Transverse colon (tissue), 4 donors: ENCODE measurements at regions of chr1 and their contacts with region 1.

Region 1: GRCh38 chr1:85438353-85438752 is 26.6 kb downstream of the DDAH1 start:
- DNase-seq: no peak
- H3K4me3 ChIP-seq: no peak overlapping the region
- H3K27ac ChIP-seq: no peak overlapping the region
- H3K4me1 ChIP-seq: peaks cover 0 to 12% (median 5%) of the 10 kb centered on the region in 4 donors
- H3K27me3 ChIP-seq: no peaks in the 10 kb centered on the region
- CTCF ChIP-seq: no peak
- EP300 ChIP-seq: no peak
- POLR2A ChIP-seq: no peak

Region 2: GRCh38 chr1:85200870-85201339 is 237.4 kb before region 1 on chr1 and contains the start of gene SYDE2:
- in situ Hi-C with region 1: no loop called
- intact Hi-C with region 1: no loop called
- DNase-seq: peak; percentile 84
- H3K4me3 ChIP-seq: peak within 1 kb of the TSS; percentile 84 to 93 (median 84)
- H3K27ac ChIP-seq: peak within 1 kb of the TSS; percentile 98 to 99 (median 98)
- H3K4me1 ChIP-seq: peaks cover 0 to 47% (median 19%) of the 10 kb centered on the region in 4 donors
- H3K27me3 ChIP-seq: no peaks in the 10 kb centered on the region
- CTCF ChIP-seq: no peak
- EP300 ChIP-seq: no peak
- POLR2A ChIP-seq: peak; percentile 87
- total RNA-seq, gene SYDE2: 10.1 to 28.8 (median 15.4) TPM

Region 3: GRCh38 chr1:85379203-85380136 is 58.9 kb before region 1 on chr1:
- in situ Hi-C with region 1: no loop called
- intact Hi-C with region 1: loop called (anchors 2 kb)
- DNase-seq: no peak
- H3K4me3 ChIP-seq: no peak overlapping the region
- H3K27ac ChIP-seq: no peak overlapping the region
- H3K4me1 ChIP-seq: peaks cover 0 to 19% (median under 1%) of the 10 kb centered on the region in 4 donors
- H3K27me3 ChIP-seq: no peaks in the 10 kb centered on the region
- CTCF ChIP-seq: no peak
- EP300 ChIP-seq: no peak
- POLR2A ChIP-seq: no peak

Region 4: GRCh38 chr1:85801520-85801919 is 363.2 kb after region 1 on chr1:
- in situ Hi-C with region 1: no loop called
- intact Hi-C with region 1: no loop called
- DNase-seq: no peak
- H3K4me3 ChIP-seq: no peak overlapping the region
- H3K27ac ChIP-seq: no peak overlapping the region
- H3K4me1 ChIP-seq: no peaks in the 10 kb centered on the region
- H3K27me3 ChIP-seq: no peaks in the 10 kb centered on the region
- CTCF ChIP-seq: no peak
- EP300 ChIP-seq: no peak
- POLR2A ChIP-seq: no peak

Region 5: GRCh38 chr1:86289161-86289560 is 850.8 kb after region 1 on chr1:
- in situ Hi-C with region 1: no loop called
- intact Hi-C with region 1: loop called (anchors 5 kb)
- DNase-seq: no peak
- H3K4me3 ChIP-seq: no peak overlapping the region
- H3K27ac ChIP-seq: no peak overlapping the region
- H3K4me1 ChIP-seq: no peaks in the 10 kb centered on the region
- H3K27me3 ChIP-seq: no peaks in the 10 kb centered on the region
- CTCF ChIP-seq: no peak
- EP300 ChIP-seq: no peak
- POLR2A ChIP-seq: no peak